Mammary epithelial cell (primary cell): ENCODE measurements at regions of chr7 and their contacts with region 1.

Region 1: GRCh38 chr7:138396251-138397070 is 63.6 kb upstream of the TRIM24 start:
- DNase-seq: no peak
- H3K4me3 ChIP-seq: no peak overlapping the region
- H3K27ac ChIP-seq: no peak overlapping the region
- H3K4me1 ChIP-seq: no peaks in the 10 kb centered on the region
- H3K27me3 ChIP-seq: no peaks in the 10 kb centered on the region
- CTCF ChIP-seq: no peak

Region 2: DNA sequence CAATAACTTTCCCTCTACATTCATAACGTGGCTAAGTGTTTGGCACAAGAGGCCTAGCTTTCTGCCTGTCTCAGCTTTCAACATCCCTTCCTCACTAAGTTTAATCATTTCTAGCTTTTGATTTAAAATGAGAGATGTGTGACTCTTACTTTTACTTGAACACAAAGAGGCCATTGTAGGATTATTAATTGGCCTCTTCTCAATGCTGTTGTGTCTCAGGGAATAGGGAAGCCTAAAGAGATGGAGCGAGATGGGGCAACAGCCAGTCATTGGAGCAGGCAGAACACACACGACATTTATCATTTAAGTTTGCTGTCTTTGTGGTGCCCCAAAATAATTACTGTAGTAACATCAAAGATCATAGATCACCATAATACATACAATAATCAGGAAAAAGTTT is 103.5 kb before region 1 on chr7:
- CTCF ChIA-PET with region 1: no interaction called
- dilution Hi-C with region 1: loop called (anchors 5 kb)
- in situ Hi-C with region 1: no loop called
- intact Hi-C with region 1: no loop called
- DNase-seq: no peak
- H3K4me3 ChIP-seq: no peak overlapping the region
- H3K27ac ChIP-seq: no peak overlapping the region
- H3K4me1 ChIP-seq: no peaks in the 10 kb centered on the region
- H3K27me3 ChIP-seq: no peaks in the 10 kb centered on the region
- CTCF ChIP-seq: no peak